Activated CD4-positive, alpha-beta T cell treated with anti-CD3 and anti-CD28 coated beads for 36 hours (primary cell): ENCODE measurements at regions of chr19 and their contacts with region 1.

Region 1: DNA sequence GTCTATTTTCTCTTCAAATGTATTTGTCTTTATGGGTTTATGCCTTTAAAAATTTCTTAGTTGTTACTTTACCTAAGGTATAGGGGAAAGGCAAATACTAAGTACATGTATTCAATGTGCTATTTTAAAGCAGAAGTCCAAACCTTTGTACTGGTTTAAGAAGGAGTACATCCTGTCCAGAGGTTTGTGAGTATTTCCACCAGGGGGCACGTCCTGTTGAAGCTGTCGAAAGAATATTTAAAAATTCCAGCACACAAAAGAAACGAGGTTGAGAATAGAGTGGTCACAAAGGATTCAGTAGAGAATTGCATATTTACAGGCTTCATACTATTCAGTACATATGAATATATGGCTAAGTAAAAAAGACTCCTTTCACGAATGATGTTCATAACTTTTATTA is 59.8 kb downstream of the URI1 start:
- DNase-seq: no peak
- ATAC-seq: no peak
- H3K4me3 Mint-ChIP-seq: no peak overlapping the region
- H3K27ac Mint-ChIP-seq: no peak overlapping the region
- H3K4me1 Mint-ChIP-seq: peaks cover 66% of the 10 kb centered on the region
- H3K27me3 Mint-ChIP-seq: no peaks in the 10 kb centered on the region

Region 2: DNA sequence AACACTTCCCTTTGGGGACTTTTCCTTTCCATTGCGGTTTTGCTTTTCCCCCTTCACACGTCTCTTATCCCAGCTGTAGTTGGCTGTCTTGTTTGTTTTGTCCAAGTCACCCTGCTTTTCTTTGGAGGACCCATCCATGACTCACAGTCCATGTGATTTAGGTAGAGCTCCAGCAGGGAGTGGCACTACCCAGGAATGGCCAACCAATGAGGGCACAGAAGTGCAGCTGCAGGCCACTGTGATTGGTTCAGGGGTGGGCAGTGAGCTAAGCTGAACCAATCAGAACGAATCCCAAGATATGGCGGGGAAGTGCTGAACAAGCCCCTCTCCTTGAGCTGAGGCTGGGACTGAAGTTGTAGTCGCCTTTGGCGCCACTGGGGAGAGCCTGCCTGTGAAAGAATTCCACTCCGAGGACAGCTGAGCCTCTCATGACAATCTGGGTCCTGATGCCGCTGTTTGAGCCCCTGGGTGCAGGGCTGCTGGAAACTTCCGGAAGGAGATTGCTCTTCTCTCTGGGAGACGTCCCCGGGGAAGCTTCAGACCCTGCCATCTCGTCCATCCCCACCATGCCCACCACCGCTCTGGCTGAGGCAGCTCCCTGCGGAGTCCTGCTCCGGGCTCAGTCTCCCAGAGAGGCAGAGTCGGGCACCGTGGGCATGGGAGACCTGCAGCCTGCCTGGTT is 122.7 kb before region 1 on chr19:
- CTCF ChIA-PET with region 1: no interaction called
- POLR2A ChIA-PET with region 1: no interaction called
- intact Hi-C with region 1: no loop called
- DNase-seq: no peak
- ATAC-seq: peak; percentile 66
- H3K4me3 Mint-ChIP-seq: no peak overlapping the region
- H3K27ac Mint-ChIP-seq: no peak overlapping the region
- H3K4me1 Mint-ChIP-seq: no peaks in the 10 kb centered on the region
- H3K27me3 Mint-ChIP-seq: peaks cover 9% of the 10 kb centered on the region

Region 3: DNA sequence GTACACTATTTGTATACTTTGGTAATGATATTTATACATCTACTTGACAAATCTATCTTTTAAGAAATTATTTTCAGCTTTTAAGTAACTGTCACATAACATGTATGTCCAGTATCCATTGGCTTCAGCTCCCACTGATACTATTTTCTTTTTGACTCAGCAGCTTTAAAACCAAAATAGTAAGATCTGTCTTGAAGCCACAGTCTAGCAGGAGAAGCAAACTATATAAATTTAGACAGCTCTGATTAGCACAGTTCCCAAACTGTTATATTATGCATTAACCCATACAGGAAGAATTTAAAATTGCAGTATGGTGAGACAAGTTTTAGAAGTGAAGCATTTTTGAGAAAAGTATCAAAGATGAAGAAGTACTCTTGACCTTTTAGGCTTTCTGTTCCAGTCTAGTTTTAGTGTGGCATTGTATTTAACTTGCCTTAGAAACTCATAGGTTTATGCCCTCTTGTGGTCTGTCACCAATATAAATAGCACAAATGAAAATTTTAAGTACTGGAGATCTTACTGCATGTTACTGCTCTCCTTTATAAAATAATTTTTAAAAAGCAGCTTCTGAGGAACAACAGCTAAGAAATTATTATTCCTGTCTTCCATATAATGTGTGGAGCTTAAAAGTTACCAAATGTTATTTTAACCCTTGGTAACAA is 35.1 kb before region 1 on chr19:
- CTCF ChIA-PET with region 1: no interaction called
- POLR2A ChIA-PET with region 1: no interaction called
- intact Hi-C with region 1: loop called in 1 of 2 experiments (anchors 5 kb)
- DNase-seq: no peak
- ATAC-seq: no peak
- H3K4me3 Mint-ChIP-seq: no peak overlapping the region
- H3K27ac Mint-ChIP-seq: no peak overlapping the region
- H3K4me1 Mint-ChIP-seq: peaks cover 77% of the 10 kb centered on the region
- H3K27me3 Mint-ChIP-seq: no peaks in the 10 kb centered on the region

Region 4: GRCh38 chr19:31349160-31349881 is 1347.5 kb after region 1 on chr19 and contains the start of gene TSHZ3:
- CTCF ChIA-PET with region 1: no interaction called
- POLR2A ChIA-PET with region 1: no interaction called
- intact Hi-C with region 1: no loop called
- DNase-seq: peak; percentile 71
- ATAC-seq: peak; percentile 48
- H3K4me3 Mint-ChIP-seq: peak within 1 kb of the TSS; percentile 70
- H3K27ac Mint-ChIP-seq: no peak within 1 kb of the TSS
- H3K4me1 Mint-ChIP-seq: peaks cover 31% of the 10 kb centered on the region
- H3K27me3 Mint-ChIP-seq: peaks cover 50% of the 10 kb centered on the region
- total RNA-seq, gene TSHZ3: 0.85 to 1.6 TPM